ENCODE measurements at regions of chr2 and their contacts with region 1.

Region 1: GRCh38 chr2:10043906-10044601 is 704 bp downstream of the KLF11 start:
- DNase-seq: peak; percentile 96
- H3K4me3 Mint-ChIP-seq: peak overlapping the region; percentile 78
- H3K27ac Mint-ChIP-seq: peak overlapping the region; percentile 82
- H3K4me1 Mint-ChIP-seq: peaks cover 15% of the 10 kb centered on the region
- H3K27me3 Mint-ChIP-seq: peaks cover 27% of the 10 kb centered on the region

Region 2: GRCh38 chr2:9799665-9800632 is 244.1 kb before region 1 on chr2:
- intact Hi-C with region 1: loop called (anchors 1 kb)
- DNase-seq: peak; percentile 97
- H3K4me3 Mint-ChIP-seq: peak overlapping the region; percentile 65
- H3K27ac Mint-ChIP-seq: peak overlapping the region; percentile 56
- H3K4me1 Mint-ChIP-seq: peaks cover 31% of the 10 kb centered on the region
- H3K27me3 Mint-ChIP-seq: peaks cover 6% of the 10 kb centered on the region

Region 3: DNA sequence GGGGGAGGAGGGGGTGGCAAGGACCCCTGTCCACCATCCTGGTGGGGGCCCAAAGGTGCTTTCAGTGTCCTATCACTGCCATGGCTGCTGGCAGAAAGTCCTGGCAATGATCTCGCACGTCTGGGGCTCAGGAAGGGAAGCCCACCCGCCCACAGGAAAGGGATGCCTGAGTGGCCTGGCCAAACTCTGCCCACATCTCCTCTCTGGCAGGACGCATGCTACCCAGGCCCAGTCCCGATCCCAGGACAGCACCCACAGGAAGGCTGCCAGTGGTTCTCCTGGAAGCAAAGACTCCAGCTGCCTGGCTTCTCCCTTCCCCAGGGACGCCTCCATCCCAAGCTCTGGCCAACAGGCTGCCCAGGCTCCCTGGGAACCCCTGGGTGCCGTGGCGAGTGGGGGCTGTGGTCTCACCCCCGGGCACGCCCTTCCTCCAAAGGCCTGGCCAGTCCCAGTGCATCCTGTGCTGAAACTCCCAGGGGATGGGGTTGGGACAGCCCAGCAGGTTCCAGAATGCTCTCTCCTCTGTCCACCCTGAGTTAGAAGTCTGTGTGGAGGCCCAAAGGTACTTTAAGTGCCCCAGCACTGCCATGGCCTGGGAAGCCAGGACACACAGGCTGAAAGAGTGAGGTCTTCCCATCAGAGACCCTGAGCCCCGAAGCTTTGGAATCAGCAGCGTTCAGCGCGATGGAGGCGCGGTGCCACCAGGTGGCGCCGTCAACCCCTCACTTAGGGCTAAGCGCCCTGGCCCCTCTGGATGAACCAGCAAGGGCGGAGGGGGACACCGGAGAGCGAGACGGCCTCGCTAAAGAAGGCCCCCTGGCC is 230.5 kb before region 1 on chr2:
- intact Hi-C with region 1: loop called (anchors 1 kb)
- DNase-seq: peak; percentile 93
- H3K4me3 Mint-ChIP-seq: no peak overlapping the region
- H3K27ac Mint-ChIP-seq: peak overlapping the region; percentile 68
- H3K4me1 Mint-ChIP-seq: peaks cover 11% of the 10 kb centered on the region
- H3K27me3 Mint-ChIP-seq: peaks cover 15% of the 10 kb centered on the region

Region 4: GRCh38 chr2:9843229-9844035 is 200.6 kb before region 1 on chr2 and contains the start of gene TAF1B:
- intact Hi-C with region 1: loop called (anchors 1 kb)
- DNase-seq: peak; percentile 97
- H3K4me3 Mint-ChIP-seq: peak within 1 kb of the TSS; percentile 92
- H3K27ac Mint-ChIP-seq: peak within 1 kb of the TSS; percentile 92
- H3K4me1 Mint-ChIP-seq: peaks cover 34% of the 10 kb centered on the region
- H3K27me3 Mint-ChIP-seq: no peaks in the 10 kb centered on the region
- total RNA-seq, gene TAF1B: 21.9 and 22.7 TPM in 2 replicates

Region 5: GRCh38 chr2:9984217-9984739 is 59.8 kb before region 1 on chr2:
- intact Hi-C with region 1: loop called (anchors 1 kb)
- DNase-seq: peak; percentile 80
- H3K4me3 Mint-ChIP-seq: no peak overlapping the region
- H3K27ac Mint-ChIP-seq: no peak overlapping the region
- H3K4me1 Mint-ChIP-seq: peaks cover 12% of the 10 kb centered on the region
- H3K27me3 Mint-ChIP-seq: peaks cover 24% of the 10 kb centered on the region

Region 6: GRCh38 chr2:10028988-10029874 is 14.8 kb before region 1 on chr2:
- intact Hi-C with region 1: no loop called
- DNase-seq: peak; percentile 85
- H3K4me3 Mint-ChIP-seq: peak overlapping the region; percentile 2
- H3K27ac Mint-ChIP-seq: peak overlapping the region; percentile 76
- H3K4me1 Mint-ChIP-seq: peaks cover 13% of the 10 kb centered on the region
- H3K27me3 Mint-ChIP-seq: peaks cover 3% of the 10 kb centered on the region